Right ventricle myocardium inferior (tissue), 1 donor: ENCODE measurements at regions of chr2 and their contacts with region 1.

Region 1: GRCh38 chr2:11556101-11556821 is 22.4 kb downstream of the GREB1 start:
- DNase-seq: no peak
- ATAC-seq: no peak

Region 2: DNA sequence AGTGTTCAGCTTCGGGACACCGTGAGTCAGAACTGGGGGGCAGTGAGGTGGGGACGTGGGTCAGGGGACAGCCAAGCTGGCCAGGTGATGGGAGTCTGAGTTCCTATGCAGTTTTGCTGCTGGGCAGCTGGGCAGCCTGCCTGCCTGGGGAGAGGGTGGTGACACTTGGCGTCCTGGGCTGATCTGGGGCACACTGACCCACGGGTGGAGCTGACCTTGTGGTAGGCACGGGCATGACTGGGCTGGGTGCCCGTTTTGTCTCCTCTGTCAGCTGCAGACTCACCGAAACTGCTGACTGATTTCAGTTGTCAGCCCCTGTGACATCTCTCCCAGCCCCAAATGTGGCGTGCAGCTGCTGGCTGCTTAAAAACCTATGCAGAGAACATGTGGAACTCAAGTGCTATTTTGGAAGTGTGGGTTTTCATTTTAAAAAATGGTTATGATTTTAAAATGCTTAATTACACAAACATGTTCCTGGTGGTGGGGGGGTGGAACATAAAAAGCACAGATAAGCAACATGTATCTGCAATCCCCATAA is 57.6 kb before region 1 on chr2:
- intact Hi-C with region 1: loop called (anchors 5 kb)
- DNase-seq: peak; percentile 92
- ATAC-seq: peak; percentile 93

Region 3: DNA sequence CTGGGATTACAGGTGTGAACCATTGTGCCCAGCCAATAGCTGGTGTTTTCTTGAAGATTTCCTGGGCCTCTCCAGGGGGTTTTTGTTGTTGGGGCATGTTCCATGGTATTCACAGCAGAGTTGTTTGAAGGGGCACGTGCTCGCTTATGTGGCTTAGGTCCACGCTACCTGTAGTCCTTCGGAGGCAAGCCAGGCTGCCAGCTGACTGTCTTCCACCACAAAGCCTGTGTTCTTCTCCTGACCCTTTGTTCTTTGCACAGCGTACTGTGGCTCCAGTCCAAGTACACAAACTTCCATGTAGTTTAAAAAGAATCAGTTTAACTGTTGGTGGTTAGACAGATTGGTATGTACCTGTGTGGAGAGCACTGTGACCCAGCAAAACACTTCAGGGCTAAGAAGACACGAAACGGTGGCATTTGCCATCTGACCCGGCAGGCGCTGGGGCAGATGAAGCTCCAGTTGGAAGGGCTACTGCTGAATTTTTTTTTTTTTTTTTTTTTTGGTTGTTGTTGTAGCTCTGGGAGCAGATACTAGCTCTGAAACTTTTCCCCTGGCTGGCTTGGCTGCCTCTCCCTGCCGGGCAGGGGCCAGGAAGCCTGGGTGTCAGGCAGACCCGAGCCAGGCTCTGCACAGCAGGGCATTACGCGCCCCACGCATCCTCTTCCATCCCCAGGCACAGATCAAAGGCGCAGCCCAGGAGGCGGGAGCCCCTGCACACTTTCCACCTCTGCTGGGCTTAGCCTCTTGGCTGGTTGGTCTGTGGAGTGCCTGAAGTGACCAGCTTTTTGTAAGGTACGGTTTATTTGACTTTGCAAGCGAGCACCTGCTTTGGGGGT is 16.7 kb before region 1 on chr2:
- intact Hi-C with region 1: loop called (anchors 2 kb)
- DNase-seq: no peak
- ATAC-seq: peak; percentile 46

Region 4: GRCh38 chr2:11589316-11589940 is 33.2 kb after region 1 on chr2:
- intact Hi-C with region 1: no loop called
- DNase-seq: no peak
- ATAC-seq: no peak

Region 5: GRCh38 chr2:11688222-11689069 is 132.2 kb after region 1 on chr2:
- intact Hi-C with region 1: no loop called
- DNase-seq: peak; percentile 88
- ATAC-seq: peak; percentile 85